ENCODE measurements at regions of chr7 and their contacts with region 1.

Region 1: DNA sequence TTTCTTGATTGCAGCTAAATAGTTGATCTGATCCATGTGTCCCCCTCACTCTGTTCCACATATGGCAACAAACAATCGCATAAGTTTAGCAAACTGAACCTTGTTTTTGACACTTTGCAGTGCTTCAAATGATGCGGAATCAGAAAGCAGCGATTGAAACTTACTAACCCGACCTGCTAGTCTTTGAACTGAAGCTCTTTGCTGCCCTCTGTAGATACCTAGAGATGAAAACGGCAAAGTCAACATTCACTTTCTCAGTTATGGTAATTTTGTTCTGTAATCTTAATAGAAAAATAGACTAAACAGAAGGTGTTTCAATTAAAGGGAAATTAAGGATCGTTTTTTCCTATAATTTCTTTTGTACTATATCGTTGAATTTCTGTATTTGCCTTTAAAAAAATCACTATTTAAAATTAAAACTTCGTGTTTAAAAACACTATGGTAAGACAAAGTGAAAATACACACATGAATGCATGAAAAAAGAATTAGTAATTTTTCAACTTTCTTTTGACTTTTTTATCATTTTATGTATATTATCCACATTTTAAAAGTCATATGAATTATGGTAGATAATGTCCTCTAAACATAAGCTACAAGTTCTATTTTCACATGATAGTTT is 276.5 kb downstream of the MAGI2 start:
- DNase-seq: no peak
- H3K4me3 Mint-ChIP-seq: no peak overlapping the region
- H3K27ac Mint-ChIP-seq: no peak overlapping the region
- H3K4me1 Mint-ChIP-seq: peaks cover 2% of the 10 kb centered on the region
- H3K27me3 Mint-ChIP-seq: no peaks in the 10 kb centered on the region

Region 2: DNA sequence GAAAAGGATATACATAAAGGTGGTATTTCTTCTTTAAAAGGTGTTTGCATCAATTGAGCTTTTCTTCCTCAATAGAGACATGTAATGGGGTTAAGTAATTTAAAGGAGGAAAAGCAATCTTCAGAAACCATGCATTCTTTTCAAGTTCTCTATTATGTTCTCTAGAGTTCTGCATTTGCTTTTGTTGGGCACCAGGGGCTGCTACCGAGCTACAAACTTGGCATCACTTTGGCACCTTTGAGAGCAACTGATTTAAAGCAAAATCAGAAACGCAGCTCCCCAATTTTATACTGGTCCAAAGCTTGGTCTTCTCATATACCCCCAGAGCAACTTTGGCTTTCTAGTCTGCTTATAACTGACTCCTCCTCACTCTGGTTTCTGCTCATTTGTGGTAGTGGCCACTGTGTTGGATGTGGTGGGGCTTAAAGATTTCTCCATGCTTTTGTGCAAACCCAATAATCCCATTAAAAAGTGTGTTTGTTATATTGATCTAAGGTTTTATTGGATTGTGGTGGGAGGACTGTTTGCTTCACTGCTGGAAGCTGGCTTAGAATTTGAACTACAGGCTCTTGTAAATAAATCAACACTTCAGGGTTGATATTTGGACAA is 666.3 kb before region 1 on chr7:
- CTCF ChIA-PET with region 1: no interaction called
- intact Hi-C with region 1: loop called (anchors 2 kb)
- DNase-seq: peak; percentile 15
- H3K4me3 Mint-ChIP-seq: no peak overlapping the region
- H3K27ac Mint-ChIP-seq: no peak overlapping the region
- H3K4me1 Mint-ChIP-seq: no peaks in the 10 kb centered on the region
- H3K27me3 Mint-ChIP-seq: no peaks in the 10 kb centered on the region